CD8-positive, alpha-beta T cell (primary cell): ENCODE measurements at regions of chr2 and their contacts with region 1.

Region 1: DNA sequence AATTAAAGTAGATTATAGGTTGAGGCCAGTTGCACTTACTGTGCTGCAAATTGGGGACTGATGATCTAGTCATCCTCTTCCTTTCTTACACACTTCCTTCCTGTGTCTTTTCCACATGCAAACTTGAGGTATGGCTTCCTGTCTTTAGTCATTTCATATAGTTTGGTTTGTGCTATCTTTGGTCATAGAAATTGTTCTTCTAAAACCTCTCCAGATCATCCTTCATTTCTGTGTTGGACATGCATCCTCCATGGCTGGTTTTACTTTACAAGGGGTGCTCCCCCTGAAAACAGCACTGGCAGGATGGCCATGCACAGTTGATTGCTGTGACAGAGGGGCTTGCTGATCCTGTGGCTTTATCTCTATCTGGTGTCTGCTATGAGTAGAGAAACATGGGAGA is 36.5 kb downstream of the MGAT5 start:
- DNase-seq: peak in 2 of 9 experiments; percentile 13 to 47
- ATAC-seq: peak; percentile 50
- H3K4me3 ChIP-seq: peak overlapping the region in 1 of 2 experiments; percentile 9
- H3K4me3 Mint-ChIP-seq: no peak overlapping the region
- H3K27ac ChIP-seq: no peak overlapping the region
- H3K27ac Mint-ChIP-seq: no peak overlapping the region
- H3K4me1 ChIP-seq: peaks cover 73% of the 10 kb centered on the region
- H3K4me1 Mint-ChIP-seq: peaks cover 50% of the 10 kb centered on the region
- H3K27me3 ChIP-seq: no peaks in the 10 kb centered on the region
- H3K27me3 Mint-ChIP-seq: no peaks in the 10 kb centered on the region
- CTCF ChIP-seq: no peak

Region 2: GRCh38 chr2:133503323-133503722 is 787.0 kb before region 1 on chr2:
- CTCF ChIA-PET with region 1: no interaction called
- POLR2A ChIA-PET with region 1: no interaction called
- intact Hi-C with region 1: no loop called
- DNase-seq: no peak
- ATAC-seq: no peak
- H3K4me3 ChIP-seq: no peak overlapping the region
- H3K4me3 Mint-ChIP-seq: no peak overlapping the region
- H3K27ac ChIP-seq: no peak overlapping the region
- H3K27ac Mint-ChIP-seq: no peak overlapping the region
- H3K4me1 ChIP-seq: no peaks in the 10 kb centered on the region
- H3K4me1 Mint-ChIP-seq: no peaks in the 10 kb centered on the region
- H3K27me3 ChIP-seq: no peaks in the 10 kb centered on the region
- H3K27me3 Mint-ChIP-seq: no peaks in the 10 kb centered on the region
- CTCF ChIP-seq: no peak

Region 3: GRCh38 chr2:134261398-134262131 is 28.8 kb before region 1 on chr2:
- CTCF ChIA-PET with region 1: interaction called, 3 read pairs
- POLR2A ChIA-PET with region 1: interaction called, 5 read pairs
- intact Hi-C with region 1: loop called (anchors 5 kb)
- DNase-seq: no peak
- ATAC-seq: no peak
- H3K4me3 ChIP-seq: no peak overlapping the region
- H3K4me3 Mint-ChIP-seq: no peak overlapping the region
- H3K27ac ChIP-seq: no peak overlapping the region
- H3K27ac Mint-ChIP-seq: peak overlapping the region; percentile 24
- H3K4me1 ChIP-seq: peaks cover 71% of the 10 kb centered on the region
- H3K4me1 Mint-ChIP-seq: peaks cover 78% of the 10 kb centered on the region
- H3K27me3 ChIP-seq: peaks cover 0 to 3% of the 10 kb centered on the region in 2 experiments
- H3K27me3 Mint-ChIP-seq: no peaks in the 10 kb centered on the region
- CTCF ChIP-seq: no peak